ENCODE measurements at regions of chr6 and their contacts with region 1.

Region 1: GRCh38 chr6:99330159-99330558 is 19.3 kb downstream of the FAXC start:
- DNase-seq: peak; percentile 71
- ATAC-seq: peak; percentile 81
- H3K4me3 ChIP-seq: no peak overlapping the region
- H3K27ac ChIP-seq: no peak overlapping the region
- H3K4me1 ChIP-seq: peaks cover 16% of the 10 kb centered on the region
- H3K27me3 ChIP-seq: no peaks in the 10 kb centered on the region
- CTCF ChIP-seq: peak; percentile 79 to 87 (median 82)
- EP300 ChIP-seq: 0 out of 4 replicates have a peak, but pooled peaks of 1 of the 2 experiments have one; percentile 23
- POLR2A ChIP-seq: no peak
- RAD21 ChIP-seq: peak; percentile 73

Region 2: GRCh38 chr6:98957446-98957845 is 372.7 kb before region 1 on chr6:
- CTCF ChIA-PET with region 1: no interaction called
- POLR2A ChIA-PET with region 1: no interaction called
- RAD21 ChIA-PET with region 1: no interaction called
- SMC1A ChIA-PET with region 1: no interaction called
- in situ Hi-C with region 1: no loop called
- intact Hi-C with region 1: no loop called
- DNase-seq: no peak
- ATAC-seq: no peak
- H3K4me3 ChIP-seq: no peak overlapping the region
- H3K27ac ChIP-seq: no peak overlapping the region
- H3K4me1 ChIP-seq: no peaks in the 10 kb centered on the region
- H3K27me3 ChIP-seq: no peaks in the 10 kb centered on the region; a peak in 1 of 4 replicates
- CTCF ChIP-seq: no peak
- EP300 ChIP-seq: no peak
- POLR2A ChIP-seq: no peak
- RAD21 ChIP-seq: no peak

Region 3: GRCh38 chr6:99393698-99394531 is 63.8 kb after region 1 on chr6 and contains the start of gene COQ3:
- CTCF ChIA-PET with region 1: interaction called, 10 read pairs
- POLR2A ChIA-PET with region 1: interaction called, 3 read pairs
- RAD21 ChIA-PET with region 1: interaction called, 7 read pairs
- SMC1A ChIA-PET with region 1: interaction called, 18 read pairs
- in situ Hi-C with region 1: no loop called
- intact Hi-C with region 1: loop called (anchors 1 kb)
- DNase-seq: peak; percentile 33
- ATAC-seq: peak; percentile 90
- H3K4me3 ChIP-seq: peak within 1 kb of the TSS; percentile 80
- H3K27ac ChIP-seq: peak within 1 kb of the TSS; percentile 71
- H3K4me1 ChIP-seq: no peaks in the 10 kb centered on the region
- H3K27me3 ChIP-seq: no peaks in the 10 kb centered on the region
- CTCF ChIP-seq: no peak
- EP300 ChIP-seq: no peak
- POLR2A ChIP-seq: peak; percentile 71
- RAD21 ChIP-seq: 0 out of 2 replicates have a peak, but pooled peaks have one; percentile 9
- polyA plus RNA-seq, gene COQ3: 43.3 to 50.6 TPM

Region 4: DNA sequence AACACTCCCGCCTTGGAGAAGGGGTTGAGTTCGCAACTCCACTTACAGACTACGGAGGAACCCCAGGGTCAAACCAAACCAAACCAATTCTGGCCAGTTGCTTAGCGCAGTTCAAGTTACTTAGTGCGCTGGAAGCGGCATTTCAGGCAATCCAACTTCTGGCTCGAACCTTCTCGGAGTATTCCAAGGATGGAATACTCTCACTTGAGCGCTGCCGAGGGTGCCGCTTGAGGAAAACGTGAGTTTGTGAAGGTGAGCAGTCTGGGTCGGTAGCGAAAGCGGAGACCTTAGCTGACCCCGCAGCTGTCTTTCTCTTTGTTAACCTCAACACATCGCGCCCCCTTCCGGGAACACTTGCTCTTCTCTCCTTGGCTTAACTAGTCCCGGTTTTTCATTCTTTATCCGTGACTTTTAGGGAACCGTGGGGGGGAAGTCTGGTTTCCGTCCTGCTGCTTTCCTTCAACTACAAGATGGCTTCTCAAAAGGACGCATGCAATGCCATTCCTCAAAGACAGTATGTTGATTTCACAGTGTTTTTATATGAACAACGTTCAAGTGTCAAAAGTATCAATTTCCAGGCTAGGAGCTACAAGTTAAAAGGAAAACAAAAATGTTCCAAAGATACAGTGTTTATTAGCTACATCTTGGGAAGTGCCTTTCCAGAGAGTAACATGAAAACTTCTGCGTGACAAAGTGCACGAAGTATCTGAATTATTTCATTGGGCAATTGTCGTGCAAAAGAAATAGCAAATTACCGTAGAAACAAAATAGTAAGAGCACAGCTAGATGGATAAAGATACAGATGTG is 95.7 kb after region 1 on chr6:
- CTCF ChIA-PET with region 1: interaction called, 61 read pairs
- POLR2A ChIA-PET with region 1: interaction called, 5 read pairs
- RAD21 ChIA-PET with region 1: interaction called, 36 read pairs
- SMC1A ChIA-PET with region 1: interaction called, 46 read pairs
- in situ Hi-C with region 1: no loop called
- intact Hi-C with region 1: loop called (anchors 1 kb)
- DNase-seq: no peak
- ATAC-seq: peak; percentile 57
- H3K4me3 ChIP-seq: peak overlapping the region; percentile 94
- H3K27ac ChIP-seq: peak overlapping the region; percentile 95
- H3K4me1 ChIP-seq: peaks cover 15% of the 10 kb centered on the region
- H3K27me3 ChIP-seq: no peaks in the 10 kb centered on the region
- CTCF ChIP-seq: peak; percentile 44 to 49 (median 48); a peak in 4 of 6 replicates
- EP300 ChIP-seq: peak in 1 of 2 experiments; percentile 13; a peak in 1 of 4 replicates
- POLR2A ChIP-seq: no peak; the same call in 1 of the 2 replicates
- RAD21 ChIP-seq: peak; percentile 53

Region 5: DNA sequence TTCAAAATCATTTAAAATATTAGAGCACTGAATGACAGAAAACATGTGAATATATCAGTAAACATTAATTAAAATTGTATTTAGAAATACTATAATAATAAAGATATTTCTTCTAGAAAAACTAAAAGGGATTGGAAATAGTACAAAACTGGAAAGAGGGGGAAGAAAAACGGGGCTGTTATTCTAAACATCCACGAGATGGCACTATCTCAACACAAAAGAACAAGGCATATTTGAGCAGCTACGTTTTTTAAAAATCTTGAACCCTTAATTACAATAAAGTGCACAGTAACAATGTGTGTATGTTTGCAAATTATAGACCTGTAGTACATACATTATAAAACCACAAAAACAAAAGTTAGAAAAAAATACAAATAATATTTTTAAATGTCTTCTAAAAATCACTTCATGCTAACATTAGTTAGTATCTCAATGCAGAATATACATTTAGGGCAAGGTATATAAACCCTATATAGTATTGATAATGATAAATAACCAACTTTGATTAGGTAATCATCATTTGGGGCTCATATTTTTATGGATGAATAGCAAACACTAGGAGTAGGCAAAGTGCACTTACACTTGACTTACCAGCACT is 137.4 kb after region 1 on chr6:
- CTCF ChIA-PET with region 1: interaction called, 11 read pairs
- POLR2A ChIA-PET with region 1: no interaction called
- RAD21 ChIA-PET with region 1: interaction called, 4 read pairs
- SMC1A ChIA-PET with region 1: no interaction called
- in situ Hi-C with region 1: no loop called
- intact Hi-C with region 1: no loop called
- DNase-seq: no peak
- ATAC-seq: peak; percentile 64
- H3K4me3 ChIP-seq: no peak overlapping the region
- H3K27ac ChIP-seq: no peak overlapping the region
- H3K4me1 ChIP-seq: no peaks in the 10 kb centered on the region
- H3K27me3 ChIP-seq: no peaks in the 10 kb centered on the region
- CTCF ChIP-seq: peak; percentile 51 to 71 (median 56)
- EP300 ChIP-seq: no peak
- POLR2A ChIP-seq: no peak
- RAD21 ChIP-seq: peak; percentile 92

Region 6: DNA sequence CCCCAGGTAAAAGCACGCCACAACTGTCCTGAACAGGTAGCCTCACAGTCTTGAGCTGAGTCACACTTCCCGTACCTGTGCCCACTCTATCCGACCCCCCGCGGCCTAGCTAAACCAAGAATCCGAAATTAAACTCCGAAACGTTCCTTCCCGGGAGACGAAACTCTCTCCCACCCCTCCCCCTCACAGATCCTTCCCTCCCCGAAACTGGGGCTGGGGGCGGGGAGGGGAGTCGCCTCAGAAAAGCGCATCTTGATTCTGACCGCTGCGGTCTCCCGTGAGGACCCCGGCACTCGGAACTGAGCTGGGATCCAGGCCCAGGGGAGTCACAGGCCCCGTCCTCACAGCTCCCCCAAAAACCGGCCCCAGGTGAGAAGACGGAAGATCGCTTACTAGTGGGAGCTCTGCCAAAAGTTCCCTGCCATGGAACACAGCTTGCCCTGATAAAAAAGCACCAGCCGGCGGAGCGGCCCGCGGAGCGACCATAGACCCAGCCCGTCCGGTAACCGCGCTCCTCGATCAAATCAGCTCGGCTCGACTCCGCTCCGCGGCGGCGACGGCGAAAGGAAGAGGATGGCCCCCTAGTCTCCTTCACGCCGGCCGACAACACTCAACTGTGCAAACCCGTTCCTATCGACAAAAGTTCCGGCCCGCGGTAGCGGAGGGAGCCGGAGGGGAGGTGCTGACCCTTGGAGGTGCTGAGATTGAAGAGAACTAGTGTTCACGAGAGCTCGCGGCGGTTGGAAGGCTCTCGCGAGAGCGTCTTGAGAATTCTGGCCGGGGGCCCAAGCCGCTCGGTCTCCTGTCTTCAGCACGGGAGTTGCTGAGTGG is 238.2 kb after region 1 on chr6 and contains the start of gene CCNC:
- CTCF ChIA-PET with region 1: interaction called, 3 read pairs
- POLR2A ChIA-PET with region 1: no interaction called
- RAD21 ChIA-PET with region 1: interaction called, 3 read pairs
- SMC1A ChIA-PET with region 1: interaction called, 3 read pairs
- in situ Hi-C with region 1: no loop called
- intact Hi-C with region 1: loop called (anchors 5 kb)
- DNase-seq: peak; percentile 76
- ATAC-seq: peak; percentile 96
- H3K4me3 ChIP-seq: peak within 1 kb of the TSS; percentile 88
- H3K27ac ChIP-seq: peak within 1 kb of the TSS; percentile 80
- H3K4me1 ChIP-seq: no peaks in the 10 kb centered on the region; the same call in 1 of the 2 replicates
- H3K27me3 ChIP-seq: no peaks in the 10 kb centered on the region
- CTCF ChIP-seq: no peak
- EP300 ChIP-seq: no peak
- POLR2A ChIP-seq: peak; percentile 96
- RAD21 ChIP-seq: 0 out of 2 replicates have a peak, but pooled peaks have one; percentile 2
- polyA plus RNA-seq, gene CCNC: 82.3 to 168 TPM

Region 7: GRCh38 chr6:99746261-99746895 is 416.2 kb after region 1 on chr6:
- CTCF ChIA-PET with region 1: interaction called, 26 read pairs
- POLR2A ChIA-PET with region 1: no interaction called
- RAD21 ChIA-PET with region 1: interaction called, 5 read pairs
- SMC1A ChIA-PET with region 1: interaction called, 3 read pairs
- in situ Hi-C with region 1: loop called (anchors 10 kb)
- intact Hi-C with region 1: loop called (anchors 1 kb)
- DNase-seq: peak; percentile 20
- ATAC-seq: peak; percentile 92
- H3K4me3 ChIP-seq: no peak overlapping the region
- H3K27ac ChIP-seq: no peak overlapping the region
- H3K4me1 ChIP-seq: no peaks in the 10 kb centered on the region
- H3K27me3 ChIP-seq: no peaks in the 10 kb centered on the region
- CTCF ChIP-seq: peak; percentile 75 to 88 (median 83); a peak in 5 of 6 replicates
- EP300 ChIP-seq: no peak
- POLR2A ChIP-seq: no peak
- RAD21 ChIP-seq: peak; percentile 87

Region 8: GRCh38 chr6:99768166-99768565 is 438.0 kb after region 1 on chr6:
- CTCF ChIA-PET with region 1: no interaction called
- POLR2A ChIA-PET with region 1: no interaction called
- RAD21 ChIA-PET with region 1: no interaction called
- SMC1A ChIA-PET with region 1: no interaction called
- in situ Hi-C with region 1: no loop called
- intact Hi-C with region 1: no loop called
- DNase-seq: no peak
- ATAC-seq: no peak
- H3K4me3 ChIP-seq: no peak overlapping the region
- H3K27ac ChIP-seq: no peak overlapping the region
- H3K4me1 ChIP-seq: no peaks in the 10 kb centered on the region
- H3K27me3 ChIP-seq: no peaks in the 10 kb centered on the region
- CTCF ChIP-seq: no peak
- EP300 ChIP-seq: no peak
- POLR2A ChIP-seq: no peak
- RAD21 ChIP-seq: no peak